ENCODE measurements at regions of chr3 and their contacts with region 1.

Region 1: GRCh38 chr3:103308921-103309320 is 874.1 kb downstream of the ZPLD1 start:
- DNase-seq: no peak
- ATAC-seq: peak; percentile 70; the same call in 2 of the 3 replicates
- H3K4me3 ChIP-seq: no peak overlapping the region
- H3K27ac ChIP-seq: no peak overlapping the region
- H3K4me1 ChIP-seq: no peaks in the 10 kb centered on the region
- H3K27me3 ChIP-seq: no peaks in the 10 kb centered on the region
- CTCF ChIP-seq: no peak
- EP300 ChIP-seq: no peak
- POLR2A ChIP-seq: no peak
- RAD21 ChIP-seq: no peak

Region 2: GRCh38 chr3:103319912-103320311 is 11.0 kb after region 1 on chr3:
- CTCF ChIA-PET with region 1: no interaction called
- POLR2A ChIA-PET with region 1: no interaction called
- in situ Hi-C with region 1: no loop called
- intact Hi-C with region 1: no loop called
- DNase-seq: no peak
- ATAC-seq: no peak
- H3K4me3 ChIP-seq: no peak overlapping the region
- H3K27ac ChIP-seq: no peak overlapping the region
- H3K4me1 ChIP-seq: no peaks in the 10 kb centered on the region
- H3K27me3 ChIP-seq: no peaks in the 10 kb centered on the region
- CTCF ChIP-seq: no peak
- EP300 ChIP-seq: no peak
- POLR2A ChIP-seq: no peak
- RAD21 ChIP-seq: no peak

Region 3: GRCh38 chr3:103349760-103350159 is 40.8 kb after region 1 on chr3:
- CTCF ChIA-PET with region 1: no interaction called
- POLR2A ChIA-PET with region 1: no interaction called
- in situ Hi-C with region 1: no loop called
- intact Hi-C with region 1: loop called (anchors 1 kb)
- DNase-seq: no peak
- ATAC-seq: no peak
- H3K4me3 ChIP-seq: no peak overlapping the region
- H3K27ac ChIP-seq: no peak overlapping the region
- H3K4me1 ChIP-seq: no peaks in the 10 kb centered on the region
- H3K27me3 ChIP-seq: no peaks in the 10 kb centered on the region
- CTCF ChIP-seq: no peak
- EP300 ChIP-seq: no peak
- POLR2A ChIP-seq: no peak
- RAD21 ChIP-seq: no peak

Region 4: GRCh38 chr3:103794656-103795055 is 485.7 kb after region 1 on chr3:
- CTCF ChIA-PET with region 1: no interaction called
- POLR2A ChIA-PET with region 1: no interaction called
- in situ Hi-C with region 1: no loop called
- intact Hi-C with region 1: no loop called
- DNase-seq: peak; percentile 12
- ATAC-seq: peak; percentile 79
- H3K4me3 ChIP-seq: no peak overlapping the region
- H3K27ac ChIP-seq: no peak overlapping the region
- H3K4me1 ChIP-seq: no peaks in the 10 kb centered on the region
- H3K27me3 ChIP-seq: no peaks in the 10 kb centered on the region
- CTCF ChIP-seq: peak; percentile 54
- EP300 ChIP-seq: no peak
- POLR2A ChIP-seq: no peak
- RAD21 ChIP-seq: no peak